ENCODE measurements at regions of chr2 and their contacts with region 1.

Region 1: GRCh38 chr2:98473995-98474780 is 29.5 kb downstream of the INPP4A start:
- DNase-seq: no peak
- H3K4me3 Mint-ChIP-seq: peak overlapping the region; percentile 70
- H3K27ac Mint-ChIP-seq: peak overlapping the region; percentile 86
- H3K4me1 Mint-ChIP-seq: peaks cover 88% of the 10 kb centered on the region
- H3K27me3 Mint-ChIP-seq: no peaks in the 10 kb centered on the region

Region 2: GRCh38 chr2:98346311-98347236 is 127.6 kb before region 1 on chr2 and contains the start of gene CNGA3:
- intact Hi-C with region 1: no loop called
- DNase-seq: peak; percentile 18
- H3K4me3 Mint-ChIP-seq: no peak within 1 kb of the TSS
- H3K27ac Mint-ChIP-seq: no peak within 1 kb of the TSS
- H3K4me1 Mint-ChIP-seq: peaks cover 3% of the 10 kb centered on the region
- H3K27me3 Mint-ChIP-seq: peaks cover 58% of the 10 kb centered on the region
- total RNA-seq, gene CNGA3: not detected in 2 replicates

Region 3: DNA sequence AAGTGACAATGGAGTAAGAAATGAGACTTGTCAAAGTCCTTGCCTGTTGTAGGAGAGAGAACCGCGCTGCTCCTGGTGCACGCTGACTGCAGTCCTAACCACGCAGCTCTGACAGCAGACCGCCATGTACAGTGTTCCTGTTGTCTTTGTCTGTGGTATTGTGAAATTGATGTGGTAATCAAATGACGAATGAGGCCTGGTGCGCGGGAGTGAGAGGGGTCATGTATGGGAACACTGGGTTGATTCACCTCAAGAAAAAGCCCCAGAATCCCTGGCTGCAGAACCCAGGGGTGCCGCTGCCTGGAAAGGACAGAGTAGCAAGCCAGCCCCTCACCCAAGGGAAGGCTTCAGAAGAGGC is 34.5 kb after region 1 on chr2:
- intact Hi-C with region 1: loop called (anchors 5 kb)
- DNase-seq: peak; percentile 25
- H3K4me3 Mint-ChIP-seq: peak overlapping the region; percentile 27
- H3K27ac Mint-ChIP-seq: peak overlapping the region; percentile 65
- H3K4me1 Mint-ChIP-seq: peaks cover 67% of the 10 kb centered on the region
- H3K27me3 Mint-ChIP-seq: no peaks in the 10 kb centered on the region